Adrenal gland (tissue), 19 donors: ENCODE measurements at regions of chr17 and their contacts with region 1.

Region 1: GRCh38 chr17:75589012-75589918 is 1.7 kb downstream of the MYO15B start:
- DNase-seq: peak; percentile 92 to 96 (median 95)
- H3K4me3 ChIP-seq: peak overlapping the region in 2 of 4 donors; percentile 30 to 78
- H3K27ac ChIP-seq: peak overlapping the region in 4 of 5 donors; percentile 78 to 95 (median 85)
- H3K4me1 ChIP-seq: peaks cover 0 to 10% of the 10 kb centered on the region in 2 donors
- H3K27me3 ChIP-seq: no peaks in the 10 kb centered on the region
- CTCF ChIP-seq: peak in 4 of 6 experiments; percentile 46 to 87 (median 72)
- POLR2A ChIP-seq: peak; percentile 53 to 55

Region 2: GRCh38 chr17:75454193-75454592 is 135.1 kb before region 1 on chr17:
- intact Hi-C with region 1: no loop called
- DNase-seq: no peak
- H3K4me3 ChIP-seq: no peak overlapping the region
- H3K27ac ChIP-seq: no peak overlapping the region
- H3K4me1 ChIP-seq: peaks cover 3 to 22% of the 10 kb centered on the region in 2 donors
- H3K27me3 ChIP-seq: no peaks in the 10 kb centered on the region
- CTCF ChIP-seq: no peak
- POLR2A ChIP-seq: no peak

Region 3: GRCh38 chr17:75524953-75525719 is 64.1 kb before region 1 on chr17 and contains the start of gene LLGL2:
- intact Hi-C with region 1: loop called in 1 of 2 experiments (anchors 5 kb)
- DNase-seq: peak; percentile 76 to 85 (median 81)
- H3K4me3 ChIP-seq: peak within 1 kb of the TSS in 3 of 4 donors; percentile 54 to 71 (median 62)
- H3K27ac ChIP-seq: peak within 1 kb of the TSS in 4 of 5 donors; percentile 47 to 81 (median 70)
- H3K4me1 ChIP-seq: peaks cover 12 to 15% of the 10 kb centered on the region in 2 donors
- H3K27me3 ChIP-seq: no peaks in the 10 kb centered on the region
- CTCF ChIP-seq: peak in 5 of 6 experiments; percentile 37 to 50 (median 41)
- POLR2A ChIP-seq: no peak
- total RNA-seq, gene LLGL2: 8.9 to 40.5 (median 23.4) TPM